CD4-positive, alpha-beta T cell (primary cell): ENCODE measurements at regions of chr10 and their contacts with region 1.

Region 1: GRCh38 chr10:11165591-11166543 is 148.2 kb downstream of the CELF2 start:
- DNase-seq: peak in 13 of 14 experiments; percentile 50 to 92 (median 66)
- ATAC-seq: peak; percentile 62
- H3K4me3 ChIP-seq: peak overlapping the region; percentile 87
- H3K4me3 Mint-ChIP-seq: peak overlapping the region; percentile 99
- H3K27ac ChIP-seq: peak overlapping the region; percentile 84 to 96
- H3K27ac Mint-ChIP-seq: no peak overlapping the region
- H3K4me1 ChIP-seq: peaks cover 53% of the 10 kb centered on the region
- H3K4me1 Mint-ChIP-seq: peaks cover 45% of the 10 kb centered on the region
- H3K27me3 ChIP-seq: no peaks in the 10 kb centered on the region
- H3K27me3 Mint-ChIP-seq: no peaks in the 10 kb centered on the region
- CTCF ChIP-seq: peak; percentile 81

Region 2: GRCh38 chr10:11009471-11010308 is 156.2 kb before region 1 on chr10:
- CTCF ChIA-PET with region 1: no interaction called
- POLR2A ChIA-PET with region 1: interaction called, 3 read pairs
- intact Hi-C with region 1: loop called (anchors 5 to 10 kb)
- DNase-seq: peak in 4 of 14 experiments; percentile 3 to 46 (median 34)
- ATAC-seq: peak; percentile 84
- H3K4me3 ChIP-seq: no peak overlapping the region
- H3K4me3 Mint-ChIP-seq: peak overlapping the region; percentile 49
- H3K27ac ChIP-seq: no peak overlapping the region
- H3K27ac Mint-ChIP-seq: peak overlapping the region; percentile 82
- H3K4me1 ChIP-seq: peaks cover 12% of the 10 kb centered on the region
- H3K4me1 Mint-ChIP-seq: peaks cover 36% of the 10 kb centered on the region
- H3K27me3 ChIP-seq: peaks cover 36 to 38% of the 10 kb centered on the region in 2 experiments
- H3K27me3 Mint-ChIP-seq: peaks cover 83% of the 10 kb centered on the region
- CTCF ChIP-seq: no peak

Region 3: DNA sequence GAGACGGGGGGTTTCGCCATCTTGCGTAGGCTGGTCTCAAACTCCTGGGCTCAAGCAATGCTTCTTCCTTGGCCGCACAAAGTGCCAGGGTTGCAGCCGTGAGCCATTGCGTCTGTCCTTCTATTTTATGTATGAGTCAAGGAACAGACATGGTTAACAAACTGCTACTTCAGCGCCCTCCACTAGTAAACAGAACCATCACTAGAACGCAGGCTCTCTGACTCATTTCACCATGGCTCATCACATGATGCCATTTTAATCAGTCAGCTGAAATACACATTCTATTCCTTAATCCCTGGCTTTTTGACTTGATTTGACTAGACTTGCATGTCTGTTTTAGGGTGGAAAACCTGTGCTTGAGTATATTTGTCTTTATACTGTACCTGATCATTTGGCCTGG is 106.9 kb before region 1 on chr10:
- CTCF ChIA-PET with region 1: no interaction called
- POLR2A ChIA-PET with region 1: no interaction called
- intact Hi-C with region 1: no loop called
- DNase-seq: no peak
- ATAC-seq: no peak
- H3K4me3 ChIP-seq: no peak overlapping the region
- H3K4me3 Mint-ChIP-seq: no peak overlapping the region
- H3K27ac ChIP-seq: no peak overlapping the region
- H3K27ac Mint-ChIP-seq: no peak overlapping the region
- H3K4me1 ChIP-seq: no peaks in the 10 kb centered on the region
- H3K4me1 Mint-ChIP-seq: no peaks in the 10 kb centered on the region
- H3K27me3 ChIP-seq: no peaks in the 10 kb centered on the region
- H3K27me3 Mint-ChIP-seq: no peaks in the 10 kb centered on the region
- CTCF ChIP-seq: no peak

Region 4: GRCh38 chr10:11106621-11107374 is 59.1 kb before region 1 on chr10:
- CTCF ChIA-PET with region 1: interaction called, 6 read pairs
- POLR2A ChIA-PET with region 1: interaction called, 96 read pairs
- intact Hi-C with region 1: no loop called
- DNase-seq: no peak
- ATAC-seq: no peak
- H3K4me3 ChIP-seq: no peak overlapping the region
- H3K4me3 Mint-ChIP-seq: no peak overlapping the region
- H3K27ac ChIP-seq: no peak overlapping the region
- H3K27ac Mint-ChIP-seq: no peak overlapping the region
- H3K4me1 ChIP-seq: peaks cover 22% of the 10 kb centered on the region
- H3K4me1 Mint-ChIP-seq: peaks cover 32% of the 10 kb centered on the region
- H3K27me3 ChIP-seq: no peaks in the 10 kb centered on the region
- H3K27me3 Mint-ChIP-seq: no peaks in the 10 kb centered on the region
- CTCF ChIP-seq: no peak

Region 5: GRCh38 chr10:11120711-11121110 is 45.2 kb before region 1 on chr10:
- CTCF ChIA-PET with region 1: interaction called, 3 read pairs
- POLR2A ChIA-PET with region 1: interaction called, 96 read pairs
- intact Hi-C with region 1: no loop called
- DNase-seq: peak in 1 of 14 experiments; percentile 16
- ATAC-seq: peak; percentile 48
- H3K4me3 ChIP-seq: no peak overlapping the region
- H3K4me3 Mint-ChIP-seq: no peak overlapping the region
- H3K27ac ChIP-seq: no peak overlapping the region
- H3K27ac Mint-ChIP-seq: peak overlapping the region; percentile 78
- H3K4me1 ChIP-seq: no peaks in the 10 kb centered on the region
- H3K4me1 Mint-ChIP-seq: peaks cover 49% of the 10 kb centered on the region
- H3K27me3 ChIP-seq: no peaks in the 10 kb centered on the region
- H3K27me3 Mint-ChIP-seq: no peaks in the 10 kb centered on the region
- CTCF ChIP-seq: no peak

Region 6: DNA sequence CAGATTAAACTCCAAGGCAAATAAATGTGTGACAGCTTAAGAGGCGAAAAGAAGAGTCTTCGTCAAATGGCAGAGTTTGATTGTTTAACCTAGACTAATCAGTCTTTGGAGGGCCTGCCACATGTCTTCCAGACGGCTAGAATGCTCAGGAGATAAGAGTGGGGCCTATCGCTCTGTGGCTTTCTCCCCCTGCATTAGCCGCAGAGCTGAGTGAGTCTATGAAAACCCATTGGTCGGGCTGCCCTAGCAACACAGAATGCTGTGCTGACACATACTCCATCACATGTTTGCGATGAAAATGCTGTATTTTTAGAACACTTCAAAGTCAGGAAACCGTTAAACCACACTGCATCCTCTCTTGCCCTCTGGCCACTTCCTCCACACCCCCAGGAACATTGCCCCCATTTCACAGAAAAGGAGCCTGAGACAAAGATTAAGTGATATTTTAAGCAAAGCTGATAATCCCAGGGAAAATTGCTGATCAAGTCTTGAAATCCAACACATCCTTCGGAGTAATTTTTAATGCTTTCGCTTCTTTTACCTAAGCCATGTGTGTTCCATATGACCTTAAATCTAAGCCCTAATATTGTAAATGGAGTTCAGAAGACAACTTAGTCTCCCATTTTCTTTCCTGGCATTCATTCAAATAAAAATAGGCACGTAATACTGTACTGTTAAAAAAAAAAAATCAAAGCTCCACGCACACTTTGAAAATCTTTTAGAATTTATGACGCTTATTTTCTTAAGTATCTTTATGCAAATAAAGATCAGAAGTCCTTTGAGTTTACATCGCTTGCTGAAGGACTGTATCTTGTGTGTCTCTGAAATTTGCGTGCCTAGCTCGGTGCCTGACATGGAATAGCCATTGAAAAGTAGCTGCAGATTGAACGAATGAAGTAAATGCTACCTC is 13.0 kb after region 1 on chr10:
- CTCF ChIA-PET with region 1: interaction called, 28 read pairs
- POLR2A ChIA-PET with region 1: interaction called, 241 read pairs
- intact Hi-C with region 1: loop called (anchors 1 kb)
- DNase-seq: peak; percentile 68 to 96 (median 76)
- ATAC-seq: peak; percentile 72
- H3K4me3 ChIP-seq: peak overlapping the region; percentile 39
- H3K4me3 Mint-ChIP-seq: peak overlapping the region; percentile 86
- H3K27ac ChIP-seq: peak overlapping the region; percentile 75 to 84
- H3K27ac Mint-ChIP-seq: no peak overlapping the region
- H3K4me1 ChIP-seq: peaks cover 91% of the 10 kb centered on the region
- H3K4me1 Mint-ChIP-seq: peaks cover 30% of the 10 kb centered on the region
- H3K27me3 ChIP-seq: no peaks in the 10 kb centered on the region
- H3K27me3 Mint-ChIP-seq: no peaks in the 10 kb centered on the region
- CTCF ChIP-seq: no peak

Region 7: DNA sequence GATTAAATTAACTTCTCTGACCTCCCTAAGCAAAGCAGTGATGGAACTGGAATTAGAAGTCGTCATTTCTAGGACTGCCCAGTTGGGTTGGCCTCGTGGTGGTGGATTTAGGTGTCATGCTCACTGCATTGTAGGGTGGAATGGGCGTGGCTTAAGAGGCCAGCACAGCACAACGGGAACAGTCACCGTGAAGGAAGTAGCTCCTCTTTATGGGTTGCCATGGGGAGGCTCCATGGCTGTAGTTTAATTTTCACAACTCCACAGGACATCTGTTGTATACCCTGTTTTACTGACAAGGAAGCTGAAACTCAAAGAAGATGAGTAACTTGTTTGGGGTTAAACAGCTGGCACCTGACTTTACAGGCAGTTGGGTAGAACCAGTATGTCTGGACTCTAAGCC is 60.1 kb after region 1 on chr10:
- CTCF ChIA-PET with region 1: interaction called, 3 read pairs
- POLR2A ChIA-PET with region 1: interaction called, 22 read pairs
- intact Hi-C with region 1: no loop called
- DNase-seq: peak in 12 of 14 experiments; percentile 22 to 85 (median 56)
- ATAC-seq: peak; percentile 72
- H3K4me3 ChIP-seq: peak overlapping the region; percentile 19
- H3K4me3 Mint-ChIP-seq: peak overlapping the region; percentile 47
- H3K27ac ChIP-seq: peak overlapping the region; percentile 74 to 78
- H3K27ac Mint-ChIP-seq: peak overlapping the region; percentile 89
- H3K4me1 ChIP-seq: peaks cover 82% of the 10 kb centered on the region
- H3K4me1 Mint-ChIP-seq: peaks cover 99% of the 10 kb centered on the region
- H3K27me3 ChIP-seq: no peaks in the 10 kb centered on the region
- H3K27me3 Mint-ChIP-seq: no peaks in the 10 kb centered on the region
- CTCF ChIP-seq: no peak

Region 8: GRCh38 chr10:11264296-11265048 is 98.6 kb after region 1 on chr10:
- CTCF ChIA-PET with region 1: no interaction called
- POLR2A ChIA-PET with region 1: no interaction called
- intact Hi-C with region 1: no loop called
- DNase-seq: no peak
- ATAC-seq: no peak
- H3K4me3 ChIP-seq: no peak overlapping the region
- H3K4me3 Mint-ChIP-seq: no peak overlapping the region
- H3K27ac ChIP-seq: no peak overlapping the region
- H3K27ac Mint-ChIP-seq: peak overlapping the region; percentile 93
- H3K4me1 ChIP-seq: peaks cover 24% of the 10 kb centered on the region
- H3K4me1 Mint-ChIP-seq: peaks cover 95% of the 10 kb centered on the region
- H3K27me3 ChIP-seq: no peaks in the 10 kb centered on the region
- H3K27me3 Mint-ChIP-seq: no peaks in the 10 kb centered on the region
- CTCF ChIP-seq: no peak

Region 9: GRCh38 chr10:11934262-11934661 is 768.4 kb after region 1 on chr10:
- CTCF ChIA-PET with region 1: no interaction called
- POLR2A ChIA-PET with region 1: no interaction called
- intact Hi-C with region 1: no loop called
- DNase-seq: no peak
- ATAC-seq: no peak
- H3K4me3 ChIP-seq: no peak overlapping the region
- H3K4me3 Mint-ChIP-seq: no peak overlapping the region
- H3K27ac ChIP-seq: no peak overlapping the region
- H3K27ac Mint-ChIP-seq: no peak overlapping the region
- H3K4me1 ChIP-seq: no peaks in the 10 kb centered on the region
- H3K4me1 Mint-ChIP-seq: no peaks in the 10 kb centered on the region
- H3K27me3 ChIP-seq: no peaks in the 10 kb centered on the region
- H3K27me3 Mint-ChIP-seq: no peaks in the 10 kb centered on the region
- CTCF ChIP-seq: no peak